Endothelial cell of umbilical vein (primary cell): ENCODE measurements at regions of chr9 and their contacts with region 1.

Region 1: GRCh38 chr9:89863837-89864236 is 259.0 kb downstream of the GADD45G start:
- DNase-seq: no peak
- H3K4me3 ChIP-seq: no peak overlapping the region
- H3K27ac ChIP-seq: no peak overlapping the region
- H3K4me1 ChIP-seq: no peaks in the 10 kb centered on the region
- H3K27me3 ChIP-seq: peaks cover 0 to 2% of the 10 kb centered on the region in 2 experiments
- CTCF ChIP-seq: no peak
- POLR2A ChIP-seq: no peak

Region 2: GRCh38 chr9:88544241-88544640 is 1319.6 kb before region 1 on chr9:
- CTCF ChIA-PET with region 1: no interaction called
- POLR2A ChIA-PET with region 1: no interaction called
- dilution Hi-C with region 1: no loop called
- intact Hi-C with region 1: no loop called
- DNase-seq: peak; percentile 5
- H3K4me3 ChIP-seq: no peak overlapping the region
- H3K27ac ChIP-seq: no peak overlapping the region
- H3K4me1 ChIP-seq: no peaks in the 10 kb centered on the region
- H3K27me3 ChIP-seq: no peaks in the 10 kb centered on the region
- CTCF ChIP-seq: no peak
- POLR2A ChIP-seq: no peak

Region 3: DNA sequence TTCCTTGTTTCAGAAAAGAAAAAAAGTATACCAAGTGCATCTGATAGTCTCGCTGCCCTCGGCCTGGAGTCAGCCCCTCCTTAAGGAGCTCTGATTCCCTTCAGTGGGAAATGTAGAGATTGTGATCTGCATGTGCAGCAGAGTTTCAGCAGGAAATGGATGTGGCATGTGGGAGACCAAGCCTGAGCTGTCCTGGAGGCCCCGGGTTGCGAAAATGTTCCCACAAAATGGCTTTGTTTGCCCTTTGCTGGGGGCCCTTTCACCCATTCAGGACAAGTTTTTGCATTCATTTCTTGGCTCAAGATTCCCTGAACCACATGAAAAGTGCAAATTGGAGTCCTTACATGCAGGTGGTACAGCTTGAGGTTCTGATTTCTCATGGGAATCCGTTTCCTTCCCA is 28.2 kb before region 1 on chr9:
- CTCF ChIA-PET with region 1: no interaction called
- POLR2A ChIA-PET with region 1: no interaction called
- dilution Hi-C with region 1: no loop called
- intact Hi-C with region 1: loop called (anchors 1 kb)
- DNase-seq: no peak
- H3K4me3 ChIP-seq: no peak overlapping the region
- H3K27ac ChIP-seq: no peak overlapping the region
- H3K4me1 ChIP-seq: no peaks in the 10 kb centered on the region
- H3K27me3 ChIP-seq: no peaks in the 10 kb centered on the region
- CTCF ChIP-seq: no peak
- POLR2A ChIP-seq: no peak